ENCODE measurements at regions of chr2 and their contacts with region 1.

Region 1: DNA sequence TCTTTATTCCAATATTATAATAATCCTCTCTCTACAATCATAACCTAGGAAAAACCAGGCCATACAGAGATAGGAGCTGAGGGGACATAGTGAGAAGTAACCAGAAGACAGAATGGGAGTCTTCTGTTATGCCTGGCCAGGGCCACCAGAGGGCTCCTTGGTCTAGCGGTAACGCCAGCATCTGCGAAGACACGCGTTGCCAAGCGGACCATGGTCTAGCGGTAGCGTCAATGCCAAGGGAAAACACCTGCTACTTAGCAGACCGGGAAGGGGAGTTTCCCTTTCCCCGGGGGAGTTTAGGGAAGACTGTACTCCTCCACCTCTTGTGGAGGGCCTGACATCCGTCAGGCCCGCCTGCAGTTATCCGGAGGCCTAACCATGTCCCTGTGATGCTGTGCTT is 36.6 kb downstream of the ARL6IP6 start:
- DNase-seq: no peak
- ATAC-seq: no peak

Region 2: GRCh38 chr2:154375579-154375931 is 1620.5 kb after region 1 on chr2:
- intact Hi-C with region 1: loop called in 1 of 2 experiments (anchors 10 kb)
- DNase-seq: no peak
- ATAC-seq: peak; percentile 51 to 59